MCF 10A (cell line): ENCODE measurements at regions of chr2 and their contacts with region 1.

Region 1: GRCh38 chr2:134823832-134824231 is 14.6 kb upstream of the ACMSD start:
- DNase-seq: no peak
- H3K4me3 Mint-ChIP-seq: no peak overlapping the region
- H3K27ac Mint-ChIP-seq: no peak overlapping the region
- H3K4me1 Mint-ChIP-seq: peaks cover 7% of the 10 kb centered on the region
- H3K27me3 Mint-ChIP-seq: no peaks in the 10 kb centered on the region
- CTCF ChIP-seq: no peak

Region 2: GRCh38 chr2:134375935-134376334 is 447.9 kb before region 1 on chr2:
- CTCF ChIA-PET with region 1: no interaction called
- POLR2A ChIA-PET with region 1: no interaction called
- intact Hi-C with region 1: no loop called
- DNase-seq: peak; percentile 52
- H3K4me3 Mint-ChIP-seq: no peak overlapping the region
- H3K27ac Mint-ChIP-seq: no peak overlapping the region
- H3K4me1 Mint-ChIP-seq: peaks cover 34% of the 10 kb centered on the region
- H3K27me3 Mint-ChIP-seq: no peaks in the 10 kb centered on the region
- CTCF ChIP-seq: peak; percentile 22

Region 3: DNA sequence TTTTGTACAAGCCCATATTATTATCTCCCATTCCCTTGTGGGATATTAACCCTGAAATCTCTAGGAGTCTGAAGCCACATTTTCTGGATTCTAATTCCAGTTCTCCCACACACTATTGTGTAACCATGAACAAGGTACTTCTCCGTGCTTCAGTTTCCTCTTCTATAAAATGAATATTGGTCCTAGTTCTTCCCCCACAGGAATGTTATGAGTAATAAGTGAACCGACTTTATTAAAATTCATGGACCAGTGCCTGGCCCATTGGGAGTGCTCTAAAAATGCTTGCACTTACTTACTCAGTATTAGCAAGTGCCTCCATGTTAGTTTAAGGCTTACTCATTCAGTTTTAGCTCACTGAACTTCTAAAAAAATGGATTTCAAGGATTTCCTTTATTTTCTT is 13.2 kb after region 1 on chr2:
- CTCF ChIA-PET with region 1: no interaction called
- POLR2A ChIA-PET with region 1: interaction called, 5 read pairs
- intact Hi-C with region 1: loop called (anchors 1 kb)
- DNase-seq: peak; percentile 71
- H3K4me3 Mint-ChIP-seq: no peak overlapping the region
- H3K27ac Mint-ChIP-seq: no peak overlapping the region
- H3K4me1 Mint-ChIP-seq: peaks cover 10% of the 10 kb centered on the region
- H3K27me3 Mint-ChIP-seq: no peaks in the 10 kb centered on the region
- CTCF ChIP-seq: no peak